ENCODE measurements at regions of chr1 and their contacts with region 1.

Region 1: GRCh38 chr1:156146020-156146768 is 7.2 kb upstream of the SEMA4A start:
- DNase-seq: peak; percentile 68
- ATAC-seq: peak; percentile 74
- H3K4me3 Mint-ChIP-seq: peak overlapping the region; percentile 58
- H3K27ac Mint-ChIP-seq: peak overlapping the region; percentile 90
- H3K4me1 Mint-ChIP-seq: peaks cover 52% of the 10 kb centered on the region
- H3K27me3 Mint-ChIP-seq: no peaks in the 10 kb centered on the region
- CTCF ChIP-seq: peak; percentile 68

Region 2: GRCh38 chr1:155513300-155513916 is 632.8 kb before region 1 on chr1:
- CTCF ChIA-PET with region 1: no interaction called
- POLR2A ChIA-PET with region 1: no interaction called
- intact Hi-C with region 1: no loop called
- DNase-seq: no peak
- ATAC-seq: no peak
- H3K4me3 Mint-ChIP-seq: no peak overlapping the region
- H3K27ac Mint-ChIP-seq: no peak overlapping the region
- H3K4me1 Mint-ChIP-seq: peaks cover 47% of the 10 kb centered on the region
- H3K27me3 Mint-ChIP-seq: no peaks in the 10 kb centered on the region
- CTCF ChIP-seq: no peak

Region 3: GRCh38 chr1:156198831-156199349 is 52.7 kb after region 1 on chr1:
- CTCF ChIA-PET with region 1: interaction called, 14 read pairs
- POLR2A ChIA-PET with region 1: interaction called, 8 read pairs
- intact Hi-C with region 1: no loop called
- DNase-seq: peak; percentile 72
- ATAC-seq: peak; percentile 81
- H3K4me3 Mint-ChIP-seq: no peak overlapping the region
- H3K27ac Mint-ChIP-seq: no peak overlapping the region
- H3K4me1 Mint-ChIP-seq: peaks cover 60% of the 10 kb centered on the region
- H3K27me3 Mint-ChIP-seq: no peaks in the 10 kb centered on the region
- CTCF ChIP-seq: no peak

Measured in activated CD8-positive, alpha-beta T cell treated with anti-CD3 and anti-CD28 coated beads for 36 hours (primary cell).